ENCODE measurements at regions of chr11 and their contacts with region 1.

Region 1: DNA sequence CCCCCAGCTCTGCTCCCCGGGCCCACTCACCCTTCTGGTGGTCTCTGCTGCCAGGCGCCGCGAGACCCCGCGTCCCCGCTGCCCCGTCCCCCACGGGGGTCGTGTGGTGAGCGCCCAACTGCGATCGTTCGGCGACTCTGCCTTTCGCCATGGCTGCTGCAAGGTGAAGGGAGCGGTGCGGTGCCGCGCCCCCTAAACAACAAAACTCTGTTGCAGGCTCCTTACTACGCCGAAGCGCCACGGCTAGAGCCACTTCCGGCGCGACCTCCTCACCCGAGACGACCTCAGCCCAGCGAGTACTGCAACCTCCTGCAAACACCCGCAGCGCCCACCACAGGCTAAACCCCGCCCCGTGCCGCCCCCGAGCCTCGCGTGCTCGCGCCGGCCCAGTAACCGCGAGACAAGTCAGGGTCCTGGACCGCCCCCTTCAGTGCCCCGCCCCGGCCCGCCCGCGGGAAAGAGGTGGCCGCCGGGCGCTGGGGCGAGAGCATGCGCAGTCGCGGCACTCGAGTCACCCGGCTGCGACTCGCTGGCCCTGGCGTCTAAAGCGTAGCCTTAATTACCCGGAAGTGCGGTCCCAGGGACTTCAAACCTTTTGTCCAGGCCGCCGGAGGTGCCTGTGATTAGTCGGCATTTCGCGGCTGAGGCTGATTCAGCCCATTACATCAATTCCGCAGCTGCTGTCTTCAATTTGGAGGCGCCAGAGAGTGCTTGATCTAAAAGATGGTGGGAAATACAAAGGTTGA is at the start of gene TMEM41B:
- H3K4me3 Mint-ChIP-seq: peak within 1 kb of the TSS; percentile 97
- H3K27ac Mint-ChIP-seq: peak within 1 kb of the TSS; percentile 96
- H3K4me1 Mint-ChIP-seq: peaks cover 58% of the 10 kb centered on the region
- H3K27me3 Mint-ChIP-seq: no peaks in the 10 kb centered on the region

Region 2: GRCh38 chr11:9265211-9266131 is 49.0 kb before region 1 on chr11 and contains the start of gene DENND5A:
- intact Hi-C with region 1: loop called (anchors 2 kb)
- H3K4me3 Mint-ChIP-seq: peak within 1 kb of the TSS; percentile 84
- H3K27ac Mint-ChIP-seq: peak within 1 kb of the TSS; percentile 96
- H3K4me1 Mint-ChIP-seq: peaks cover 38% of the 10 kb centered on the region
- H3K27me3 Mint-ChIP-seq: peaks cover 25% of the 10 kb centered on the region

Region 3: DNA sequence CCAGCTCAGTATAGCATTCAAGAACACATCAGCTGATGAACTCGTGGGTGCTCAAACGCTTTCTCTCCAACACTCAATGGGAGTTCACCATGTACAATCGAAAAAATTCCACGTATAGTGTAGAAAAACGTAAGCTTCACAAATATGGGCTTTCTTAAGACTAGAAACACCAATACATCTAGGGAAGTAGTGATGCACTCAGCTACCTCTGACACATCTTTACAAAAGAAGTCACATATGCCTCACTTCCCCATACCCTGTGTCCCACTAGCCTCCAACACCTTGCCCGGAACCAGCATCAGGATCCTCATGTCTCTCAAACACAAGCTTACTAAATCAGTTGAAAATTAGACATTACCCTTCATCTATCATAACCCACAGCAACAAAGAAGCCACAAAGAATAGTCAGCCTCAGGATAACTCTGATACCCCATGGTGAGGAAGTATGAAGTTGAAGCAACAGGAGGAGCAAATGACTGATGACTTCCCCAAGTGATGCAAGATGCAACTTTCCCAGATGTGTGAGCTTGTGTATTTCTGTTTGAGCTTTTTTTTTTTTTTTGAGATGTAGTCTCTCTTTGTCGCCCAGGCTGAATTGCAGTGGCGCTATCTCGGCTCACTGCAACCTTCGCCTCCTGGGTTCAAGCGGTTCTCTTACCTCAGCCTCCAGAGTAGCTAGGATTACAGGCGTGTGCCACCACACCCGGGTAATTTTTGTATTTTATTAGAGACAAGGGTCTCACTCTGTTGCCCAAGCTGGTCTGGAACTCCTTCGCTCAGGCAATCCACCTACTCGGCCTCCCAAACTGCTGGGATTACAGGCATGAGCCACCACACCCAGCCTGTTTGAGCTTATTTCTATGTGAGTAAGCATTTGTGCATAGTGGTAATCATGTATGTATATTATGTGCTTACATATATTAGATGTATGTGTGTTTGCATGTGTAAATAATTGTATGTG is 40.8 kb before region 1 on chr11:
- intact Hi-C with region 1: loop called (anchors 1 kb)
- H3K4me3 Mint-ChIP-seq: no peak overlapping the region
- H3K27ac Mint-ChIP-seq: peak overlapping the region; percentile 83
- H3K4me1 Mint-ChIP-seq: peaks cover 20% of the 10 kb centered on the region
- H3K27me3 Mint-ChIP-seq: peaks cover 3% of the 10 kb centered on the region

Region 4: GRCh38 chr11:9363954-9364912 is 49.8 kb after region 1 on chr11:
- intact Hi-C with region 1: loop called (anchors 2 kb)
- H3K4me3 Mint-ChIP-seq: peak overlapping the region; percentile 78
- H3K27ac Mint-ChIP-seq: peak overlapping the region; percentile 99
- H3K4me1 Mint-ChIP-seq: peaks cover 26% of the 10 kb centered on the region
- H3K27me3 Mint-ChIP-seq: no peaks in the 10 kb centered on the region

Region 5: DNA sequence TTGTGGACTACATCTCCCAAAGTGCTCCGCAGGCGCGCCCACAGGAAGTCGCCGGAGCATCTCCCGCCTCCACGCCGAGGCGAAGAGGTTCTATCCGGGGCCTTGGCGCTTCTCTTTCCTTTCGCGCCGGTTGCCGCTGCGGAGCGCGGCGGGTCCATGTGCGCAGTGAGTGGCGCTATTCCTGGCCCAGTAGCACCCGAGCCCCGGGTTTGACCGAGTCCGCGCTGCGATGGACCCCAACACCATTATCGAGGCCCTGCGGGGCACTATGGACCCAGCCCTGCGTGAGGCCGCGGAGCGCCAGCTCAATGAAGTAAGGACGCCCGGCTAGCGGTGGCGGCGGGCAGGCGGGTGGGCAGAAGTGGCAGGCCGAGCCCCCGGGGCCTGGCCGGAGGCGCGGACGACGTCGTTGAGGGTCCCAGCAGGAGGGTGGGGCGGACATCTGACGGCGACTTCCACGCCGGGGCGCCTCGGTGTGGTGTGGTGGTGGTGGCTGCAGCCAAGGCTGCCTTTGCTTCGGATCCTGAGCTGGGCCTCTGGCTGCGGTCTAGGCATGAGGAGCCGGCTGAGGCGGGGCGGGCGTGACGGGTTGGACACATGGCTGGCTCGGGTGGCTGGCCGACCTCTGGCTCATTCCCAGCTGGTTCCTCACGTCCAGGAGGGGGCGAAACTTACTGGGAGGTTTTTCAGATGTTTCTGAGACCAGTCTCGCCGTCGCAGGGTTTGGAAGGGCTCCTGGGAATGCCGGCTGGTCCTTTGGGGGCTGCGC is 70.3 kb after region 1 on chr11 and contains the start of gene IPO7:
- intact Hi-C with region 1: loop called (anchors 1 kb)
- H3K4me3 Mint-ChIP-seq: peak within 1 kb of the TSS; percentile 87
- H3K27ac Mint-ChIP-seq: peak within 1 kb of the TSS; percentile 98
- H3K4me1 Mint-ChIP-seq: peaks cover 26% of the 10 kb centered on the region
- H3K27me3 Mint-ChIP-seq: no peaks in the 10 kb centered on the region

Region 6: DNA sequence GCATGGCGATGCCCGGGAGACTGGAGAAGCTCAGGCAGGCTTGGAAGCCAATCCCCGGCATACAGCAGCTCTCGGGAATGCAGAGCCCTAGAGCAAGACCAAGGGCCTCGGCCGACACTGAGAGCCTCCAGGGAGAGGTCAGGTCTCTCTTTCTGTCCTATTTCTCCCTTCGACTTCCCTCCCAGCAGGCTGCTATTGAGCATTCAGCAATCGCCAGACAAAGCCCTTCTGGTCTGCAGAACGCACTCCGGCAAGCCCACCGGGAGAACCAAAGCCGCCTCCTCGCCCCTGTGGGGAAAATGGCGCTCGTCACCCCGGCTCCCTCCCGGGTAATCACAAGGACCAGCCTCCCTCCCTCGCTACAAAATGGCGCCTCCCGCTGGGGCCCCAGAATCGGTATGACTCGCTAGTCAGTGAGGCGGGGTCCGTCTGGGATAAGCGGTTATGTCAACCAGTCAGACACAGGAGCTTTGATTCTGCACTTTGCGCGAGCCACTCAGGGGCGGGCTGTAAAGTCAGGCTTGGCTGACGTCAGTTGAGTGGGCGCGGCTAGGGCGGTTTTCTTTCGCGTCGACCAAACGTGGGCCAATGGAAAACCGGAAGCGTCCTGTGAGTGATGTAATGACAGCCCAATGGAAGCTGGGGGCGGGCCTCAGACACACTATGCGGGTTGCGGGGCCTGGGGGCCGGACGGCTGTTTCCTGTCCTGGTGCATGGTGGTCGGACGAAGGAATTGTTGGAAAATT is 146.0 kb after region 1 on chr11 and contains the start of gene ZNF143:
- intact Hi-C with region 1: loop called (anchors 10 kb)
- H3K4me3 Mint-ChIP-seq: peak within 1 kb of the TSS; percentile 98
- H3K27ac Mint-ChIP-seq: peak within 1 kb of the TSS; percentile 98
- H3K4me1 Mint-ChIP-seq: peaks cover 12% of the 10 kb centered on the region
- H3K27me3 Mint-ChIP-seq: no peaks in the 10 kb centered on the region

Region 7: GRCh38 chr11:9922806-9923205 is 608.3 kb after region 1 on chr11:
- intact Hi-C with region 1: no loop called
- H3K4me3 Mint-ChIP-seq: no peak overlapping the region
- H3K27ac Mint-ChIP-seq: no peak overlapping the region
- H3K4me1 Mint-ChIP-seq: peaks cover 9% of the 10 kb centered on the region
- H3K27me3 Mint-ChIP-seq: no peaks in the 10 kb centered on the region

Measured in dendritic cell treated with granulocyte-macrophage colony-stimulating factor and Interleukin-4, amounts not matched to agents 40 ng/mL and 50 ng/mL, for 4 days (primary cell).